Left ventricle myocardium superior (tissue), 1 donor: ENCODE measurements at regions of chr10 and their contacts with region 1.

Region 1: DNA sequence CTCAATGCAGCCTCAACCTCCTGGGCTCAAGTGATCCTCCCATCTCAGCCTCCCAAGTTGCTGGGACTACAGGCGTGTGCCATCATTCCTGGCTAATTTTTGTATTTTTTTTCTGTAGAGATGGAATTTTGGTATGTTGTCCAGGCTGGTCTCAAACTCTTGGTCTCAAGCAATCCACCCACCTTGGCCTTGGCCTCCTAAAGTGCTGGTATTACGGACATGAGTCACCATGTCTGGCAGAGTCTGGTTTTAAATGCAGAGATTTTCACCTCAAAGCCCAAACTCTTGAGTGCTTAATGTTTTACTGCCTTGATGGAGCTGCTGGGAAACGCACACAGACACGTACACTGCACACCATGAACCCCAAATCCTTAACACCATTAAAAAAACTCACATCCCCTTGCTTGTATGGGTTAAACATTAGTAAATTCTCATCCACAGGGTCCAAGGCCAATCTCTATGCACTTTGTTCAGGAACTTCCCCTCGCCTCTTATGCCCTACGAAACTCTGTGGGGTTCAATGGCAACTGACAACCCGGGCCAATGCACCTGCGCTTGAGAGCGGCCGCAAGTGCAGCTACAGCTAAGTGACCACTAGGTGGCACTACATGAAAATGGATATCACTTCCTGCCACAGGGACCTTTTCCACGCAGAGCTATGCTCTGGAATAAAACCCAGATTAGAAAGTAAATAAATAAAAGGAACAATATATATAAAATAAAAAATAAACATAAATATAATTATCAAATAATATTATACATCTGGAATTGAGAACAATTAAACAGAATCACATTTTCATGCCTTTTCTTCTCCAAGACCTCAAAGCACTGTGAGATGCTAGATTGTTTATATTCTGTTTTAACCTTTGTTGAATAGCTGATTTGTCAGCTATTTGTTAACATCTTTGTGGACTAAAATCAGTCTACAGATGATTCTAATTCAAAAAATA is 66.9 kb upstream of the AFAP1L2 start:
- DNase-seq: peak; percentile 68
- ATAC-seq: peak; percentile 70

Region 2: DNA sequence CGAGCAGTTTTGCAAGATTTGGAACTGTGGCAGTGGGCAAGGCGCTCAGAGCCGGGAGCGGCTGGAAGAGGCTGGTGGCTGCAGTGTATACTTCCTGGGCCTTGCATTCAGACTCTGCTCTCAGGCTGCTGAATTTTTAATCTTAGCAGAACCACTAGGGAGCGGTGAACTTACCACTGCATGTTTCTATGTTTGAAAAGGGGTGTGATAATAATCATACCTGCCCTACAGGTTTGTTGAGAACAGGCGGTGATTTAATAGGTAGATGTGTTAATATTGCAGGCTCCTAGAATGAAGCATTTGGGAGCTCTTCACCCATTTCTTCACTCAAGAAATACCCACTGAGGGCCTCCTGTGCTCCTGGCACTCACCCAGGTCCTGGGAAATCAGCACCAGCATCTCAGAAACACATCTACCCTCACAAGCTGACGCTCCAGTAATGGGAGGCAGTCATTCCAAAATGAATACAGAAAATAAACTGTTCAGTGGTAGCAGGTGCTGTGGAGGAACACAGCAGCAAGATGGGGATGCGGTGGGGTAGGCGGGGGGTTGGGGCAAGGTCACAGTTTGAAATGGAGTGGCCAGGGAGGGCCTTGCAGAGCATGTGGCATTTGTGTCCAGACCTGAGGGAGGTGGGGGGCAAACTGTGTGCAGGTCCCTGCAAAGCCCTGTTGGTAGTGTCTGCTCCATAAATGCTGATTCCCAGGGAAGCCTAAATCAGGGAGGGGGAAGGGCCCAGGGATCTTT is 191.2 kb before region 1 on chr10:
- intact Hi-C with region 1: no loop called
- DNase-seq: no peak
- ATAC-seq: no peak

Region 3: GRCh38 chr10:114526504-114527238 is 55.4 kb after region 1 on chr10:
- intact Hi-C with region 1: loop called (anchors 10 kb)
- DNase-seq: peak; percentile 80
- ATAC-seq: peak; percentile 80

Region 4: DNA sequence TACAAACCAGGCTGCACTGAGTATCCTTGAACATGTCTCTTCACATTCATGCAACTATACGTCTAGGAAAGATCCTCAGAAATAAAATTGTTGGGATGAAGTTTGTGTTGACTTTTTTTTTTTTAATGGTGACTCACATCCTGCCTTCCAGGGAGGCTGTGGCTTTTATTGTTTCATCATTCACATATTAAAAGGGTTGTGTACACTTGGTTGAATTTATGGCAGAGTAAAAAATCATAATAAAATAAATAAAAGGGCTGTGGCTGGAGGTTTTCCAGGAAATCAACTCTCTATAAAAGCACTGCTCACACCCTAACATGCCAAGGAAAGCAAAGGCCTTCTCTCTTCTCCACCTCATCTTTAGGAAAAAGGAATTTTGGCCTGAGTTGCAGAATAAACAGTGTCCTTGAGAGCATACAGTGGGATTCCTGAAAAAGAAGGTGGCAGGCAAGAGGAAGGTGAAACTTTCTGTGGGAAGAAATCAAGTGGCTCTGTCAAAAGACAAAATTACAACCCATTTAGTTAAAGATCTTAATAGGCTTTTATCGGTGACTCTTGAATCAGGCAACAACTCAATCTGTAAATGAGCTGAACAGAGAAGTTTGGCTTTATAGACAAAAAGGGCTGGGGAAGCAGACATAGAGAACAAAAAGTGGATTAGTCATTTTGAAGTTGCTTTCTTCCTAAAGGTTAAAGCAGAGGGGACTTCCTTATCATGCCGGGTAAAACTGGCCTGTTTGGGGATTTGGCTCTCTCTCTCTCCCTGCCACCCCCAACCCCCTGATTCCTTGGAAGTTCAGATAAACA is 308.8 kb after region 1 on chr10:
- intact Hi-C with region 1: loop called (anchors 10 kb)
- DNase-seq: no peak
- ATAC-seq: no peak